ENCODE measurements at regions of chr16 and their contacts with region 1.

Region 1: GRCh38 chr16:67326472-67327309 is at the starts of genes KCTD19 and LRRC36:
- DNase-seq: peak; percentile 98
- ATAC-seq: peak; percentile 99
- H3K4me3 Mint-ChIP-seq: peak within 1 kb of the TSS; percentile 83
- H3K27ac Mint-ChIP-seq: no peak within 1 kb of the TSS
- H3K4me1 Mint-ChIP-seq: peaks cover 3% of the 10 kb centered on the region
- H3K27me3 Mint-ChIP-seq: peaks cover 56% of the 10 kb centered on the region
- CTCF ChIP-seq: peak; percentile 49
- total RNA-seq, gene KCTD19: 0.85 to 1.1 TPM (median 0.85 TPM) in 3 replicates
- total RNA-seq, gene LRRC36: 0.13 to 0.39 TPM (median 0.18 TPM) in 3 replicates

Region 2: DNA sequence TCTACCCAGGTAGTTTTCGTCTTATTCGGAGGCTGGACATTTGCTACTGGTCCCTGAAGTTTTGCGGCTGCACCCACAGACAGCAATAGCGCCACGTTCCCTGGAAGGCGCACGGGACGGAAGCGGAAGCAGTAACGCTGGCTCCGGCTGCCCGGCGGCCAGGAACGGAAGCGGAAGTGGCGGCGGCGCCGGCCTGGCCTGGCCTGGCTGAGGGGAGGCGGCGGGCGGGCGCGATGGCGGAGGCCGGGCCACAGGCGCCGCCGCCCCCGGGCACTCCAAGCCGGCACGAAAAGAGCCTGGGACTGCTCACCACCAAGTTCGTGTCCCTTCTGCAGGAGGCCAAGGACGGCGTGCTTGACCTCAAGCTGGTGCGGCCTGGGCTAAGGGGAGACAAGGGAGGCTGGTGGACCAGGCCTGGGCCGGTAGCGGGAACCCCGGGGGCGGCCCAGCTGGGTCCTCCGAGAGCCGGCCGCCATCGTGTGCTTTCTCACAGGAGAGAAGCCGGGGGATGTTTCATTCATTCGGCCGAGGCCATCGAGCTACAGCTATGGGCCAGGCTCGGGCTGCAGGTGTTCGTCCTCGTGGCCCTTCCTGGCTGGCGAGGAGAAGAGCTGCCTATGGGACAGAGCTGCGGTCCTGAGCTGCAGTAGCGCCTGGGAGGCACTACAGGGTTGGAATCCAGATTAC is 134.6 kb before region 1 on chr16 and contains the start of gene E2F4:
- CTCF ChIA-PET with region 1: no interaction called
- POLR2A ChIA-PET with region 1: no interaction called
- DNase-seq: peak; percentile 86
- ATAC-seq: peak; percentile 93
- H3K4me3 Mint-ChIP-seq: peak within 1 kb of the TSS; percentile 87
- H3K27ac Mint-ChIP-seq: peak within 1 kb of the TSS; percentile 63
- H3K4me1 Mint-ChIP-seq: peaks cover 23% of the 10 kb centered on the region
- H3K27me3 Mint-ChIP-seq: no peaks in the 10 kb centered on the region
- CTCF ChIP-seq: no peak
- total RNA-seq, gene E2F4: 75.6 to 85.0 TPM (median 75.8 TPM) in 3 replicates

Region 3: DNA sequence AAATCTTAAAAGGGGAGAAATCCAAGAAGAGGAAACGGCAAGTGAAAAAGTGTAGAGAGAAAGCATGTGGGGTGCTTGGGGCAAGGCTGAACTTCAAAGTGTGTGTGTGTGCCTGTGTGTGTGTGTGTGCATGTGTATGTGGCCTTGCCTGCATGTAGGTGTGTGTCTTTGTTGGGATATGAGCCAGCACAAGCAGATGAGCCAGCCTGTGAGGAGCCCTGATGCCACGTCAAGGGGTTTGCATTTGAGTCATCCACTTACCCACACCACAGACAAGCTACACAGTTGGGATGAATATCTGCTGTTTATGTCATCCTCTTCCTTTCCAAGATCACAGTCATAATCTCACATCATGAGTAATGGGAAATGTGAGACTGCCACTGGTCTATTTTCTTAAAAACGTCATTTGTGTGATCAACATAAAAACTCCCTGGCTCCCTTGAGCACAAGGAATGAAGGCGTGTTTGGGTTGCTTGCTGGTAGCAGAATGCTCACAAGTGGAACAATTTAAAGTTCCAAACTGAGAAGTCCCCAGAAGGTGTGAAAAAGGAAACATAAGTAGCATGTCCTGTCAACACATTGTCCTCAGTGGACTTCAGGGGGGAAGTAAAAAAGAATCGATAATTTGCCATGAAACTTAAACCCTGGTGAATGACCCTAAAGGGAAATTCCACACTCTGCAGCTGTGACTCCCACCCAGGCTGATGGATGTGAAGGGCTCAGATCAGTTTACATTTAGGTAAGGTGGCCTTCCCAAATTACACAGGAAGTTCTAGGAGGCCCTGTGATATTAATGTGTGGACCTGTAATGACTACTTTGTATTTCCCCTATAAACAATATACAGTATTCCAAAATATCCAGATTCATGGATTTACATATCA is 14.8 kb before region 1 on chr16:
- CTCF ChIA-PET with region 1: interaction called, 20 read pairs
- POLR2A ChIA-PET with region 1: no interaction called
- DNase-seq: no peak
- ATAC-seq: no peak
- H3K4me3 Mint-ChIP-seq: no peak overlapping the region
- H3K27ac Mint-ChIP-seq: no peak overlapping the region
- H3K4me1 Mint-ChIP-seq: no peaks in the 10 kb centered on the region
- H3K27me3 Mint-ChIP-seq: peaks cover 5% of the 10 kb centered on the region; the same call in 1 of the 2 replicates
- CTCF ChIP-seq: no peak

Region 4: GRCh38 chr16:67349172-67349571 is 22.5 kb after region 1 on chr16:
- CTCF ChIA-PET with region 1: interaction called, 15 read pairs
- POLR2A ChIA-PET with region 1: no interaction called
- DNase-seq: no peak
- ATAC-seq: no peak
- H3K4me3 Mint-ChIP-seq: no peak overlapping the region
- H3K27ac Mint-ChIP-seq: no peak overlapping the region
- H3K4me1 Mint-ChIP-seq: no peaks in the 10 kb centered on the region
- H3K27me3 Mint-ChIP-seq: peaks cover 7% of the 10 kb centered on the region
- CTCF ChIP-seq: no peak

Region 5: GRCh38 chr16:67415872-67416793 is 89.4 kb after region 1 on chr16 and contains the start of gene ZDHHC1:
- CTCF ChIA-PET with region 1: interaction called, 11 read pairs
- POLR2A ChIA-PET with region 1: interaction called, 7 read pairs
- DNase-seq: peak; percentile 83
- ATAC-seq: peak; percentile 89
- H3K4me3 Mint-ChIP-seq: peak within 1 kb of the TSS; percentile 73
- H3K27ac Mint-ChIP-seq: peak within 1 kb of the TSS; percentile 77
- H3K4me1 Mint-ChIP-seq: peaks cover 33% of the 10 kb centered on the region
- H3K27me3 Mint-ChIP-seq: peaks cover 20% of the 10 kb centered on the region
- CTCF ChIP-seq: no peak
- total RNA-seq, gene ZDHHC1: 4.2 to 4.9 TPM (median 4.6 TPM) in 3 replicates

Region 6: DNA sequence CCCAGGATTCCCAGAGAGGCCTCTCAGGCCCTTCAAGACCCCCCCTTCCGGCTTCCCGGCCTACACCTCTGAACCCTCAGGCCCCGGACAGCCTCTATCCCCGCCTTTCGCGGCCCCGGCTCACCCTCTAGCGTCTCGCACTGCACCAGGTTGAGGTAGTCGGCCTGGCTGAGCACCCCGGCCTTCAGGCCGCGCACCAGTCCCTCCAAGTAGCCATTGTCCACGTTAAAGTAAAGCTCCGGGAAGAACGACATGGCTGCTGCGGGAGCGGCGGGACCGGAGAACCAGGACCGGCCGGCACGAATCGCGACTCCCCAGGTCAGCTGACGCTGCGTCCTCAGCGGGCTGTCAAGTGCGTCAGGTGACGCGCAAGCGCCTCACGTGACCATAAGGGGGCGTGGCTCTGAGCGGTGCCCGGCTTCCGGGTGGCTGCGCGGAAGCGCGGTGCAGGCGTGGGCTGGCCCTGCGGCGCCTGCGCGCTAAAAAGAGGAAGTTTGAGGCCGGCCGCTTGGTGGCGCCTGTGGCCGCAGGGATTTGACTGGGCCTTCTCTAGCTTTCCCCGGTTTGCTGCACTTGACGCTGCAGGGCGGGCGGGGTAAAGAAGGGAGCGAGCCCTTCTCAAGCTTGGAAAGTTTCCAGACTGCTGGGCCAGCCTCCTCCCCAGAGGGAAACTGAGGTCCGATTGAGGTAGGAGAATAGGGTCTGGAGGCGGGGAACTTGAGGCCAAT is 154.3 kb after region 1 on chr16 and contains the start of gene ATP6V0D1:
- CTCF ChIA-PET with region 1: interaction called, 11 read pairs
- POLR2A ChIA-PET with region 1: no interaction called
- DNase-seq: peak; percentile 99
- ATAC-seq: peak; percentile 95
- H3K4me3 Mint-ChIP-seq: peak within 1 kb of the TSS; percentile 98
- H3K27ac Mint-ChIP-seq: peak within 1 kb of the TSS; percentile 97
- H3K4me1 Mint-ChIP-seq: peaks cover 5% of the 10 kb centered on the region
- H3K27me3 Mint-ChIP-seq: peaks cover 36% of the 10 kb centered on the region
- CTCF ChIP-seq: peak; percentile 49; the same call in 1 of the 2 replicates
- total RNA-seq, gene ATP6V0D1: 32.5 to 44.1 TPM (median 33.8 TPM) in 3 replicates

Measured in WTC11 (cell line).